MCF 10A (cell line): ENCODE measurements at regions of chr20 and their contacts with region 1.

Region 1: GRCh38 chr20:44460795-44461141 is 14.9 kb upstream of the TTPAL start:
- DNase-seq: peak; percentile 64
- H3K4me3 Mint-ChIP-seq: no peak overlapping the region
- H3K27ac Mint-ChIP-seq: no peak overlapping the region
- H3K4me1 Mint-ChIP-seq: peaks cover 13% of the 10 kb centered on the region
- H3K27me3 Mint-ChIP-seq: no peaks in the 10 kb centered on the region
- CTCF ChIP-seq: peak; percentile 66

Region 2: GRCh38 chr20:44398303-44398702 is 62.5 kb before region 1 on chr20:
- CTCF ChIA-PET with region 1: interaction called, 155 read pairs
- POLR2A ChIA-PET with region 1: interaction called, 17 read pairs
- intact Hi-C with region 1: no loop called
- DNase-seq: peak; percentile 93
- H3K4me3 Mint-ChIP-seq: no peak overlapping the region
- H3K27ac Mint-ChIP-seq: peak overlapping the region; percentile 58
- H3K4me1 Mint-ChIP-seq: peaks cover 10% of the 10 kb centered on the region
- H3K27me3 Mint-ChIP-seq: no peaks in the 10 kb centered on the region
- CTCF ChIP-seq: no peak

Region 3: GRCh38 chr20:44407402-44408184 is 53.2 kb before region 1 on chr20:
- CTCF ChIA-PET with region 1: interaction called, 10 read pairs
- POLR2A ChIA-PET with region 1: interaction called, 7 read pairs
- intact Hi-C with region 1: no loop called
- DNase-seq: peak; percentile 95
- H3K4me3 Mint-ChIP-seq: no peak overlapping the region
- H3K27ac Mint-ChIP-seq: peak overlapping the region; percentile 59
- H3K4me1 Mint-ChIP-seq: peaks cover 19% of the 10 kb centered on the region
- H3K27me3 Mint-ChIP-seq: no peaks in the 10 kb centered on the region
- CTCF ChIP-seq: no peak

Region 4: DNA sequence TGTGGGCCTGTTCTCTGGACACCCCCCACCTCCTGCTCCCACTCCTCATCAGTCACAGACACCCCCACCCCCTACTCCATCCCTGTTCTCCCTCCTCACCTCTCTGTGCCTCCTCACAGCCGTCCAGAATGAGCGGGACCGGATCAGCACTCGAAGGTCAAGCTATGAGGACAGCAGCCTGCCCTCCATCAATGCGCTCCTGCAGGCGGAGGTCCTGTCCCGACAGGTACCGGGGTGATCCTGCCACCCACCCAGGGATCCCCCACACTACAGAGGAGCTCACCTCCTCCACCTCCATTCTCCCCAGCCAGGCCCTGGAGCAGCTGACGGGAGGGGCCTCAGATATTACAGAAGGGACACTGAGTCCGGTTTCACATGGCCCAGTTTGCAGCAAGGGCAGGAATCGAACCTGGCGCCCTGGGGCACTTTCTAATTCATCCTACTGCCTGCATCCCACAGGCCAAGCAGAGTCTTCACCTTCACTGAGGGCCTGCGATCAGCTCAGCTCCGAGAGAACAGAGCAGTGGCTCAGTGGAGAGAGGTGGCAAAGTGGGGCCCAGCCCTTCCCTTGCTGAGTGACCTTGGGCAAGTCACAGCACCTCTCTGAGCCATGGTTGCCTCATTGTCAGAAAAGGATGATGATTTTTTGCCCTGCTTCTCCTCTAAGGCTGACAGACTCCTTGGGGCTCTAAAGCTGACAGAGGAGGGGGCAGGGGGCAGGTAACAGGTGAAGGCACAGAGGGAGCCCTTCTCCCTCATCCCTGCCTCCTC is 47.0 kb before region 1 on chr20:
- CTCF ChIA-PET with region 1: interaction called, 11 read pairs
- POLR2A ChIA-PET with region 1: no interaction called
- intact Hi-C with region 1: no loop called
- DNase-seq: no peak
- H3K4me3 Mint-ChIP-seq: no peak overlapping the region
- H3K27ac Mint-ChIP-seq: no peak overlapping the region
- H3K4me1 Mint-ChIP-seq: no peaks in the 10 kb centered on the region
- H3K27me3 Mint-ChIP-seq: no peaks in the 10 kb centered on the region
- CTCF ChIP-seq: no peak

Region 5: GRCh38 chr20:44448753-44449546 is 11.8 kb before region 1 on chr20:
- CTCF ChIA-PET with region 1: interaction called, 16 read pairs
- POLR2A ChIA-PET with region 1: interaction called, 4 read pairs
- intact Hi-C with region 1: no loop called
- DNase-seq: peak; percentile 36
- H3K4me3 Mint-ChIP-seq: no peak overlapping the region
- H3K27ac Mint-ChIP-seq: no peak overlapping the region
- H3K4me1 Mint-ChIP-seq: peaks cover 13% of the 10 kb centered on the region
- H3K27me3 Mint-ChIP-seq: no peaks in the 10 kb centered on the region
- CTCF ChIP-seq: peak; percentile 24